GM10248 (cell line): ENCODE measurements at regions of chr5 and their contacts with region 1.

Region 1: DNA sequence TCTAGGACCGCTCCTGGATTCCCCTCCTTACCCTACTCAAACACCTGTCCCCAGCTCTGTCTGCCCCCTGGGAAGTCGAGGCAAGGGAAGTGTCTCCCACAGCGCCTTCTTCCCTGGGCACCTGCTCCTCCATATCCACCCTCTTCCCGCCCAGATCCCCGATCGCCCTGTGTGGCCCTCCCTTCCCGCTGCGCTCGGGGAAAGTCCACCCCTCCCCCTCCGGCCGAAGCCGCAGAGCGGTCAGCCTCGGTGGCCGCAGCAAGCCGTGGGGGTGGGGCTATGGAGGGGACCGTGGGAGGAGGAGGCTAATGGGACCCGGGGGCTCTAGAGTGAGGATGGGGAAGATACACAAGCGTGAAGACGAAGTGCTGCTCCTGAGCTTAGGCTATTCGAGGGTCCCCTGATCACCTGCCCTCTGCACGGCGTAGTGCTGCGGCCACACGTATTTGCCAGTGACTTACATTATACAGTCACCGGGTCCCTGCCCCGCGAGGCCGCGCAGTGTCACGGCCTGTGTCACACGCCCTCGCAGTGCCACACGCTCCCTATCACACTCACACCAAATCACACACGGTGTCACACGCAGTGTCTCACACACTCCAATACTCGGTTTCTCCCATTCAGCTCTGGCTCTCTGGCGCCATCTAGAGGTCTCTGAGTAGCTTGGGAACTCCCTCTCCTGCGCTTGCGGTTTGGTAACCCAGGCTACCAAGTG is 658 bp upstream of the PCDH1 start:
- DNase-seq: peak; percentile 84
- CTCF ChIP-seq: peak; percentile 89

Region 2: GRCh38 chr5:141701360-141702119 is 177.3 kb before region 1 on chr5:
- CTCF ChIA-PET with region 1: interaction called, 158 read pairs
- POLR2A ChIA-PET with region 1: no interaction called
- DNase-seq: peak; percentile 54
- CTCF ChIP-seq: no peak

Region 3: GRCh38 chr5:141825791-141826560 is 52.9 kb before region 1 on chr5:
- CTCF ChIA-PET with region 1: interaction called, 10 read pairs
- POLR2A ChIA-PET with region 1: no interaction called
- DNase-seq: peak; percentile 60
- CTCF ChIP-seq: peak; percentile 29

Region 4: GRCh38 chr5:141889282-141889871 is 10.5 kb after region 1 on chr5:
- CTCF ChIA-PET with region 1: interaction called, 38 read pairs
- POLR2A ChIA-PET with region 1: interaction called, 6 read pairs
- DNase-seq: no peak
- CTCF ChIP-seq: peak; percentile 53

Region 5: GRCh38 chr5:141923448-141924352 is 44.8 kb after region 1 on chr5 and contains the start of gene DELE1:
- CTCF ChIA-PET with region 1: interaction called, 11 read pairs
- POLR2A ChIA-PET with region 1: interaction called, 3 read pairs
- DNase-seq: peak; percentile 95
- CTCF ChIP-seq: no peak

Region 6: DNA sequence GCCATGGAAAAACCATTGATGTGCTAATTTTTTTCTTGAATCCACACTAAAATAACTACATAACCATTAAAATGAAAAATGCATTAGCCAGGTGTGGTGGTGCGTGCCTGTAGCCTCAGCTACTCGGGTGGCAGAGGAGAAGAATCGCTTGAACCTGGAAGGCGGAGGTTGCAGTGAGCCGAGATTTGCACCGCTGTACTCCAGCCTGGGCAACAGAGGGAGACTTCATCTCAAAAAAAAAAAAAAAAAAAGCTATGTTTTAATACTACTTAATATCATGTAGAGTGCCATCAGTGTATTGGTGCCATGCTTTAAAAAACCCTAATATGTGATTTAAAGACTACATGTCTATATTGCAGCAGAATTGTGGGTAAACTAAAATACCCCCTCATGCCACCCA is 288.6 kb after region 1 on chr5:
- CTCF ChIA-PET with region 1: no interaction called
- POLR2A ChIA-PET with region 1: no interaction called
- DNase-seq: no peak
- CTCF ChIP-seq: no peak

Region 7: GRCh38 chr5:142248853-142249462 is 370.1 kb after region 1 on chr5:
- CTCF ChIA-PET with region 1: no interaction called
- POLR2A ChIA-PET with region 1: no interaction called
- DNase-seq: no peak
- CTCF ChIP-seq: no peak

Region 8: DNA sequence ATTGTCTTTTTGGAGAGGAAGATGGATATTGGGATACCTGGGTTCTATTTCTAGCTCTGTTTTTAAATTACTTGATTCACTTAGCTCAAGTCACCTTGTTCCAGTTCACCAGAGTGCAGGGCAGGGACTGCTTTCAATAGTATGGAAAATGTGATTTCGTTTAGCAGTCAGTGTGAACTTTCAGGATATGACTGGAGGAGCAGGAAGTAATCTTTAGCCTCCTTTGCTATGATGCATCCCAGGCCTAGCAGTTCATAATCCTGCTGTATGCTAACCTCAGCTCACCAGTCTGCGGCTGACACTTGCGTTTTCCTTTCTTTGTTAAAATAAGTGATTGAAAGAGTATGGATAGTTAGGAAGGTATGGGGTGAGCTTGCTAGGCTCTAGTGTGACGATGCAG is 1061.0 kb after region 1 on chr5:
- CTCF ChIA-PET with region 1: no interaction called
- POLR2A ChIA-PET with region 1: no interaction called
- DNase-seq: no peak
- CTCF ChIP-seq: no peak